ENCODE measurements at regions of chr16 and their contacts with region 1.

Region 1: DNA sequence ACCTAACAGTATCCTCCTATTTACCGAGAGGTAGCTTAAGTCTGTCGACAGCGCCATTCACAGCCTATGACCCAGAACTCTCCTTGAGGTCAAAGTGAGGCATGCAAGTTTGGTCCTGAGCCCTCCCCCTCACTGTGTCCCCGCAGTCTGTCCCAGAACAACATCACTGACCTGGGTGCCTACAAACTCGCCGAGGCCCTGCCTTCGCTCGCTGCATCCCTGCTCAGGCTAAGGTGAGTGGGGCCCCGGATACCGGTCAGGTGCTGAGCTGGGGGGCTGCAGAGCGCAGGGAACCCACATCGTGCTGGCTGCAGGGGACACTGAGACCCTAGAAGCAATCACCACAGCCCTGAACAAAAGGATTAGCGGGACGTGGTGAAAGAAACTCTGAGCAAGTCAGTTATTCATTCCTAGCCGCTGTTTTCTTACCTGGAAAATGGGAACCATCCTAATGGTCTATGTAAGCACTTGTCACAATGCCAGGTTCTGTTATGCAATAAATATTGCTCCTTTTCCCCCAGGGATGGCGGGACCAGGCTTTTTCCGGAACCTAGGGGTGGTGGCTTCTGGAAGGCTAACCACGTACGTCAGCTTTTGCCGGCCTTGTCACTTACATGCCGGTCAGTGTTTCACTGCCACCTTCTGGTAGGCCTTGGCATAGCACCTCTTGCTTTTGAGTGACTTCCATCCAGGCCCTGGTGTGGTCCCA is 23.8 kb downstream of the DEXI start:
- DNase-seq: peak; percentile 94
- ATAC-seq: peak; percentile 71
- H3K4me3 ChIP-seq: peak overlapping the region in 1 of 3 experiments; percentile 55; a peak in 2 of 6 replicates
- H3K27ac ChIP-seq: no peak overlapping the region
- H3K4me1 ChIP-seq: peaks cover 43% of the 10 kb centered on the region
- H3K27me3 ChIP-seq: peaks cover 0 to 9% of the 10 kb centered on the region in 2 experiments; a peak in 1 of 5 replicates
- CTCF ChIP-seq: peak; percentile 99
- EP300 ChIP-seq: no peak
- POLR2A ChIP-seq: no peak
- RAD21 ChIP-seq: peak; percentile 94

Region 2: DNA sequence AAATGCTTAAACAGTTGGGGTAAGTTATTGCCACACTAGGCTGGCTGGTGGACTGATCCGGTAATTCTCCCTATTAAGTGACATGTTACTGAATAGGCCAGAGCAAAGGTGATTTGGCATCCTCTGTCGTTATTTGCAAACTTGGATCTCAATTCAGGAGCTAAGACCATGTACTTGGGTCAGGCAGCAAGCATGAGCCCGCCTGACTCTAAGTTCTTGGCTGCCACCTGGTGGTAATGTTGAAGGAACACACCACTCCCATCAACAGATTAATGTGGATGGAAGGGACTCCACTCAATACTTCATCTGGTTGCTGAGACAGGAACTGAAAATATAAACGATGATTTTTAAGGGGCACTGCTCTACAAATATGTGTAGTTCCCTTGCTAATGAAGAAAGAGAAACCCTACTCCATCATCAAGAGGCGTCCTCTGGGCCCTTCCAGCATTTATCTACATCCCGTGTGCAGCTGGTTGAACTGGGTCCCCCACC is 408.9 kb before region 1 on chr16:
- CTCF ChIA-PET with region 1: interaction called, 19 read pairs
- POLR2A ChIA-PET with region 1: no interaction called
- in situ Hi-C with region 1: no loop called
- intact Hi-C with region 1: loop called (anchors 1 kb)
- DNase-seq: peak; percentile 91
- ATAC-seq: peak; percentile 97
- H3K4me3 ChIP-seq: no peak overlapping the region
- H3K27ac ChIP-seq: no peak overlapping the region
- H3K4me1 ChIP-seq: peaks cover 24% of the 10 kb centered on the region
- H3K27me3 ChIP-seq: no peaks in the 10 kb centered on the region; a peak in 1 of 5 replicates
- CTCF ChIP-seq: peak; percentile 100
- EP300 ChIP-seq: no peak
- POLR2A ChIP-seq: no peak
- RAD21 ChIP-seq: peak; percentile 98

Region 3: DNA sequence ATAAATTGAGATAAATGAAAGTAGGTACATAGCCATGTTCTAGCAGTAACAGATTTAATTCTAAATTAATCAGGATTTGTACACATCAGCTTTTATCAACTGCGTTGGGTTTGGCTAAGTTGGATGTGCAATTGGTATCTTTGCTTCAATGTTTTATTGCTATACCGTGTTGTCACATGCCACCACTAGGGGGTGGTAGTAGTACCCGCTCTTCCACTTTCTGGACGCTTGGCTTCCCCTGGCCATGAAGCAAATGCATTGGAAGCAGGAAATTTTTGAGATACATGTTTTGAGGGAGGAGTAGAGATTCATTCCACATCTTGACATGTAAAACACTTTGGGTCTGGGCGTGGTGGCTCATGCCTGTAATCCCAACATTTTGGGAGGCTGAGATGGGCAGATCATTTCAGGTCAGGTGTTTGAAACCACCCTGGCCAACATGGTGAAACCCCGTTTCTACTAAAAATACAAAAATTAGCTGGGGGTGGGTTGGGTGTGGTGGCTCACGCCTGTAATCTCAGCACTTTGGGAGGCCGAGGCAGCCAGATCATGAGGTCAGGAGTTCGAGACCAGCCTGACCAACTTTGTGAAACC is 396.7 kb before region 1 on chr16:
- CTCF ChIA-PET with region 1: no interaction called
- POLR2A ChIA-PET with region 1: interaction called, 3 read pairs
- in situ Hi-C with region 1: loop called (anchors 5 kb)
- intact Hi-C with region 1: loop called (anchors 2 kb)
- DNase-seq: peak; percentile 79
- ATAC-seq: peak; percentile 42
- H3K4me3 ChIP-seq: no peak overlapping the region
- H3K27ac ChIP-seq: no peak overlapping the region
- H3K4me1 ChIP-seq: peaks cover 27% of the 10 kb centered on the region
- H3K27me3 ChIP-seq: no peaks in the 10 kb centered on the region
- CTCF ChIP-seq: peak; percentile 93
- EP300 ChIP-seq: no peak
- POLR2A ChIP-seq: no peak
- RAD21 ChIP-seq: peak; percentile 58; the same call in 1 of the 2 replicates

Region 4: DNA sequence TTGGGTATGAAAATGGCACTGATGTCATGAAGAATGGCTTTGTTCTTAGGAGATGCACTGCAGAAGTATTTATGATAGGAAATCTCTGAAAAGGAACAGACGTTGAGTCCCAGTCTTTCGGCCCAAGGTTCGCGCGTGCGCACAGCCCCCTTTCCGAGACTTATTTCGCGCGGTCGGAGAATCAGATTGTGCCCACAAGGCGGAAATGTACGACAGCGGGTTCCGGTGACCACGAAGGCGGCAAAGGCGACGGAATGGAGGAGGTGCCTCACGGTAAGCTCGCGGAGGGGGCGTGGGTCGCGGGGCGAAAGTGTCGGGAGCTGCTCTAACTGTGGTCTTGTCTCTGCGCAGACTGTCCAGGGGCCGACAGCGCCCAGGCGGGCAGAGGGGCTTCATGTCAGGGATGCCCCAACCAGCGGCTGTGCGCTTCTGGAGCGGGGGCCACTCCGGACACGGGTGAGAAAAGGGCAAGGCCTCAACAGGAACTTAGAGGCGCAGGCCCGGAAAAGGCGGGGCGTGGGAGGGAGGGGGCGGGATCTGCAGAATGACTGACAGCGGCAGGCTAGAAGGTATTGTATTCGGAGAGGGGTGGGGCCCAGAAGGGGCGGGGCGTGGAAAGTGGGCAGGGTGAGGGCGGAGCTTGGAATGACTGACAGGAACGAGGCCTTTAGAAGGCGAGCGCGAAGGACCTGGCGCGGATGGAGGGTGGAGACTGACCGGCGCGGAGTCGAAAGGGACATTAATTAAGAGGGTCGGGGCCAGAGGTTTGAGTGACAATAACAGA is 174.6 kb before region 1 on chr16 and contains the start of gene NUBP1:
- CTCF ChIA-PET with region 1: no interaction called
- POLR2A ChIA-PET with region 1: interaction called, 25 read pairs
- in situ Hi-C with region 1: loop called (anchors 5 kb)
- intact Hi-C with region 1: loop called (anchors 1 kb)
- DNase-seq: peak; percentile 98
- ATAC-seq: peak; percentile 96
- H3K4me3 ChIP-seq: peak within 1 kb of the TSS; percentile 71 to 77 (median 74)
- H3K27ac ChIP-seq: peak within 1 kb of the TSS; percentile 94
- H3K4me1 ChIP-seq: peaks cover 31% of the 10 kb centered on the region
- H3K27me3 ChIP-seq: no peaks in the 10 kb centered on the region; a peak in 1 of 5 replicates
- CTCF ChIP-seq: peak; percentile 33
- EP300 ChIP-seq: peak in 1 of 2 experiments; percentile 61; a peak in 2 of 4 replicates
- POLR2A ChIP-seq: peak; percentile 90 to 97
- RAD21 ChIP-seq: peak; percentile 73; the same call in 1 of the 2 replicates
- total RNA-seq, gene NUBP1: 70.4 and 85.8 TPM in 2 replicates

Region 5: DNA sequence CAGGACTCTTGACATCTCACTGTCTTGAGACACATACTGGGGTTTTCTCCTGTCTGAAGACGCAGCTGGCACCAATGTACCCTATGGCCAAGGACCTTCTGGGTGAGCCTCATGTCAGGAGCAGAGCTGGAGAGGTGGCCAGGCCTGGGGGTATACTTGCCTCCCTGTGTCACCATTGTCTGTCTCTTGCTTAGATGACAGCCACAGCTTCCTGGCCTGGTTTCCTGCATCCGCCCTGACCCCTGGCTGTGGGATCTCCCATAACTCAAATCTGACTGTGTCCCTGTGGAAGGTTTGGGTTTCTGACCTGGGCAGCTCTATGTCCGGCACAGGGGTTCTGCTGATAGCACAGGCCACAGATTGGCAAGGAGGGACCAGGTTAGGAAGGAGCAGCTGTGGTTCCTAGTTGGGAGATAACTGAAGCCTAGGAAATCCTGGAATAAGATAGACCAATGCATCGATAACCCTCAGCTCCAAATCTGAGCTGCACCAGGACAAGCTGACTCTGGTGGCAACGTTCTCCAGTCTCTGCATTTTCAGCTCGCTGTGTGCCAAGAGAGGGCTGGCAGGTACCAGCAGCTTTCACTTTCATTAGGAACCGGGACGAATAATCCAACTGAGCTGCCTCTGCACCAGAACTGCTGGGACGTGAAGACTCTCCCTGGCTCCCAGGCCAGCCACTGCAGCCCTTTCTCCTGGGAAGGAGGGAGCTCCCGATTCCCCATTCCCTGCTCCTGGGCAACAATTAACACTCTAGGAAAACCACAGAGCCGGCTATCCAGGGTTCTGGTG is 18.8 kb after region 1 on chr16:
- CTCF ChIA-PET with region 1: no interaction called
- POLR2A ChIA-PET with region 1: interaction called, 60 read pairs
- in situ Hi-C with region 1: no loop called
- intact Hi-C with region 1: no loop called
- DNase-seq: no peak
- ATAC-seq: no peak; the same call in 2 of the 3 replicates
- H3K4me3 ChIP-seq: no peak overlapping the region
- H3K27ac ChIP-seq: peak overlapping the region; percentile 3
- H3K4me1 ChIP-seq: peaks cover 58% of the 10 kb centered on the region
- H3K27me3 ChIP-seq: no peaks in the 10 kb centered on the region; a peak in 1 of 5 replicates
- CTCF ChIP-seq: peak; percentile 45
- EP300 ChIP-seq: no peak
- POLR2A ChIP-seq: no peak; a peak in 1 of 4 replicates
- RAD21 ChIP-seq: no peak

Region 6: GRCh38 chr16:10944249-10945064 is 26.0 kb after region 1 on chr16 and contains the start of gene CLEC16A:
- CTCF ChIA-PET with region 1: no interaction called
- POLR2A ChIA-PET with region 1: interaction called, 60 read pairs
- in situ Hi-C with region 1: no loop called
- intact Hi-C with region 1: loop called (anchors 1 kb)
- DNase-seq: peak; percentile 97
- ATAC-seq: peak; percentile 83
- H3K4me3 ChIP-seq: peak within 1 kb of the TSS; percentile 91 to 93 (median 92)
- H3K27ac ChIP-seq: peak within 1 kb of the TSS; percentile 24
- H3K4me1 ChIP-seq: peaks cover 52% of the 10 kb centered on the region
- H3K27me3 ChIP-seq: no peaks in the 10 kb centered on the region; a peak in 1 of 5 replicates
- CTCF ChIP-seq: peak; percentile 28
- EP300 ChIP-seq: peak in 1 of 2 experiments; percentile 61; a peak in 2 of 4 replicates
- POLR2A ChIP-seq: peak; percentile 71 to 72
- RAD21 ChIP-seq: peak; percentile 70; the same call in 1 of the 2 replicates
- total RNA-seq, gene CLEC16A: 10.3 and 13.6 TPM in 2 replicates

Region 7: DNA sequence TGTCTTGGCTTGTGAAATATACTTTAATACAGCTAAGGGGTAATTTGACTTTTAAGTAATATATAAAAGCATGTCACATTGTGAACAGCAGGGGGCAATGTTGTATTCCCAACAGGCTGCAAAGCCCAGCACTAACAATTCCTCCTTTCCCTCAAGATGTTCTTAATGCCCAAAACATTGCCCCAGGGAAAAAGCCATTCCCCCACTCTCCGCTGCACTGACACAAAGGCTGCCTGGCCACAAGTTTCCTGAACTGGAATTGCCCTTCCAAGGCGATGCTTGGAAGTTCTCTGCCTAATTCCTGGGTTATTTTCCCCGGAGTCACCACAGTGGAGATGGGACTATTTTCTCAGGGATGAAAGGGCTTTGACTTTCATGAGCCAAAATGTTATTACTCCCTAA is 53.1 kb after region 1 on chr16:
- CTCF ChIA-PET with region 1: no interaction called
- POLR2A ChIA-PET with region 1: no interaction called
- in situ Hi-C with region 1: no loop called
- intact Hi-C with region 1: no loop called
- DNase-seq: peak; percentile 70
- ATAC-seq: peak; percentile 70
- H3K4me3 ChIP-seq: no peak overlapping the region
- H3K27ac ChIP-seq: no peak overlapping the region
- H3K4me1 ChIP-seq: peaks cover 9% of the 10 kb centered on the region
- H3K27me3 ChIP-seq: no peaks in the 10 kb centered on the region; a peak in 1 of 5 replicates
- CTCF ChIP-seq: peak; percentile 88
- EP300 ChIP-seq: no peak
- POLR2A ChIP-seq: no peak
- RAD21 ChIP-seq: peak; percentile 85